ENCODE measurements at regions of chr3 and their contacts with region 1.

Region 1: DNA sequence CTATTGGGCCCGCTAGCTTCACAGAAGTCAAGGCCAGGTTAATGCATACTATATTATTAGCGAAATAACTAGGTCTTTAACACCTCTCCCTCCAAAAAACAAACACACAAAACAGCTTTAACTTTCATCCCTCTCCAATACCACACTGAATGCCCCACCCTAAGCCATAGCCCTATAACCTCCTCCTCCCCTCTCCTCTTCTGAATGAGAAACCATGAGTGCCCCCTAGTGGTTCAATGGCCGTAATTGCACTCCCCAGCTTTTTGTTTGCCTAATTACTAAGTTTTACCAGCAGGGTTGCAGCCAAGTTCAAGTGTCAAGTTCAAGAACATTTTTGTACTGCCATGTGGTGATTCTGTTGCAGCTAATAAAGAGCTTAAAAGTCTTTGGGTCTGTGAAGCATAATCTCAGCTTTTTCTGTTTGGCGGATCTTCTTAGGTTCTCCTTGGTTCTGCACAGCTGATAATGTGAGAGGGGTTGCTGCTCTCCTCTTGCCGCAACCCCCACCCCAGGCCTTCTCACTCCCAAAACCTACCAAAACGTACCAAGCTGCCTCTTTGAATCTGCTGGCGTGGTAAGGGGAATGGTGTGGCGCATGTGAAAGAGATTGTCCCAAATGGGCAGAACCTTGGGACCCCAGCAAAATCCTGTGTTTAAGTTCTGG is 57.9 kb downstream of the RPL22L1 start:
- DNase-seq: peak; percentile 64 to 73 (median 67)
- H3K4me3 ChIP-seq: no peak overlapping the region
- H3K4me3 Mint-ChIP-seq: no peak overlapping the region
- H3K27ac ChIP-seq: no peak overlapping the region
- H3K27ac Mint-ChIP-seq: no peak overlapping the region
- H3K4me1 ChIP-seq: no peaks in the 10 kb centered on the region
- H3K4me1 Mint-ChIP-seq: peaks cover 0 to 5% (median under 1%) of the 10 kb centered on the region in 4 donors
- H3K27me3 ChIP-seq: no peaks in the 10 kb centered on the region
- H3K27me3 Mint-ChIP-seq: peaks cover 0 to 2% of the 10 kb centered on the region in 2 donors

Region 2: GRCh38 chr3:170189398-170190256 is 622.4 kb before region 1 on chr3:
- CTCF ChIA-PET with region 1: interaction called, 10 read pairs
- POLR2A ChIA-PET with region 1: no interaction called
- intact Hi-C with region 1: no loop called
- DNase-seq: no peak
- H3K4me3 ChIP-seq: no peak overlapping the region
- H3K4me3 Mint-ChIP-seq: peak overlapping the region in 3 of 8 donors; percentile 21 to 49 (median 22)
- H3K27ac ChIP-seq: no peak overlapping the region
- H3K27ac Mint-ChIP-seq: no peak overlapping the region
- H3K4me1 ChIP-seq: no peaks in the 10 kb centered on the region
- H3K4me1 Mint-ChIP-seq: peaks cover 8 to 11% (median 9%) of the 10 kb centered on the region in 4 donors
- H3K27me3 ChIP-seq: no peaks in the 10 kb centered on the region
- H3K27me3 Mint-ChIP-seq: peaks cover 0 to 1% of the 10 kb centered on the region in 2 donors

Region 3: DNA sequence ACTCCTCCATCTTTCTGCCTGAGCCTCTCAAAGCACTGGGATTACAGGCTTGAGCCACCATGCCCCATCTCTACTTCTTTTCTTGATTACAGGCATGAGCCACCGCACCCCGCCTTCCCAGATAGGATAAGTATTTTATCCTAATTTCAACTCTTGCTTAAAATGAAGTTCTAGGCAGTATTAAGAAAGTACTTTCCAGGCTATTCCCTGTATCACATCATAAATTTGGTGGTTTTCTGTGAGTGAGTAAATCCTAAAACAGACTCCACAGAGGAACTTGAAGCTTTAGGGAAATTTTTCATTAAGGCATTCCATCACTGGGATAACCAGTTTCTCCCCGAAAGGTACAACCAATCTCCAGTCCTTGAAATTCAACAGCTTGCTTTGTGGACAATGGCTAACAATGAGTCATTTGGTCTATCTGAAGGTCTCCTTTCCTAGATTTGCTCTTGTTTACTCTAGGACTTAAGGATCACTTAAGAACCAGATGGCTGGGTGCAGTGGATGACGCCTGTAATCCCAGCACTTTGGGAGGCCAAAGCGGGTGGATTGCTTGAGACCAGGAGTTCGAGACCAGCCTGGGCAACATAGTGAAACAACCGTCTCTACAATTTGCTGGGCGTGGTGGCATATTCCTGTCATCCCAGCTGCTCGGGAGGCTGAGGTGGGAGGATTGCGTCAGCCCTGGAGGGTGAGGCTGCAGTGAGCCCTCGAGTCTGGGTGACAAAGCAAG is 504.2 kb before region 1 on chr3:
- CTCF ChIA-PET with region 1: interaction called, 23 read pairs
- POLR2A ChIA-PET with region 1: no interaction called
- intact Hi-C with region 1: no loop called
- DNase-seq: no peak
- H3K4me3 ChIP-seq: no peak overlapping the region
- H3K4me3 Mint-ChIP-seq: no peak overlapping the region
- H3K27ac ChIP-seq: no peak overlapping the region
- H3K27ac Mint-ChIP-seq: no peak overlapping the region
- H3K4me1 ChIP-seq: no peaks in the 10 kb centered on the region
- H3K4me1 Mint-ChIP-seq: peaks cover 0 to 1% (median 0%) of the 10 kb centered on the region in 4 donors
- H3K27me3 ChIP-seq: no peaks in the 10 kb centered on the region
- H3K27me3 Mint-ChIP-seq: no peaks in the 10 kb centered on the region

Region 4: DNA sequence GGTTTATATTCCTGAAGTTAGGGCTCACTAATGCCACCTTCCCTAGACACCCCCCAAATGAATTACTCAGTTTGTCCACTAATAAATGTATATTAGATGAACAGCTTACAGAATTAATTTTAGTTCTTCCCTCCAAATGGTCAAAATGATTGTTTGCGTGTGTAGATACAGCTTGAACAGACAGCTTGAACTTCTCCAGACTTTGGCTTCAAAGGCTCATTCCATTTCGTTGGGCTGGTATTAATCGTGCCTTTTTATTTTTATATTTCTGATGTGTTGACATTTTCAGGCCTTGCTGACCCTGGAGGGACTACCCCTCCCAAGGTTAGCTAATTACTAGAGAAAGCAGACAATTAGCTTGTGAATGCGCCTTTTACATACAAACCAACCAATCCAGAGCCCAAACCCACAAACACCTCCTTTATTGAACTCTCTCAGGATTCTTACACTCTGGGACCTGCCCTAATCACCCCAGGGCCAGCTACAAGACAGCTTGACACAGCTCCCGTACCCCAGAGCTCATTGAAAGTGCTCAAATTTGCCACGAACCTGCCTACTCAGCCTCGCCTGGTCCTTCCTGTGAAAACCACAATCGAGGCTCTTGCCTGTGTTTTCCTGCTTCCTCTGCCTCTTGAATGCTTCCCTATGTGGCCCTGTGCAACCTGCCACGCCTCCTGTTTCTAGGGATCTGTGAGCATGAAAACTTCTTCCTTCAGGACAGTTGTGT is 17.6 kb after region 1 on chr3:
- CTCF ChIA-PET with region 1: interaction called, 35 read pairs
- POLR2A ChIA-PET with region 1: no interaction called
- intact Hi-C with region 1: no loop called
- DNase-seq: no peak
- H3K4me3 ChIP-seq: no peak overlapping the region
- H3K4me3 Mint-ChIP-seq: no peak overlapping the region
- H3K27ac ChIP-seq: no peak overlapping the region
- H3K27ac Mint-ChIP-seq: peak overlapping the region in 1 of 7 donors; percentile 48
- H3K4me1 ChIP-seq: no peaks in the 10 kb centered on the region
- H3K4me1 Mint-ChIP-seq: peaks cover 0 to 9% (median 6%) of the 10 kb centered on the region in 4 donors
- H3K27me3 ChIP-seq: peaks cover 7% of the 10 kb centered on the region
- H3K27me3 Mint-ChIP-seq: peaks cover 6 to 25% of the 10 kb centered on the region in 2 donors

Region 5: DNA sequence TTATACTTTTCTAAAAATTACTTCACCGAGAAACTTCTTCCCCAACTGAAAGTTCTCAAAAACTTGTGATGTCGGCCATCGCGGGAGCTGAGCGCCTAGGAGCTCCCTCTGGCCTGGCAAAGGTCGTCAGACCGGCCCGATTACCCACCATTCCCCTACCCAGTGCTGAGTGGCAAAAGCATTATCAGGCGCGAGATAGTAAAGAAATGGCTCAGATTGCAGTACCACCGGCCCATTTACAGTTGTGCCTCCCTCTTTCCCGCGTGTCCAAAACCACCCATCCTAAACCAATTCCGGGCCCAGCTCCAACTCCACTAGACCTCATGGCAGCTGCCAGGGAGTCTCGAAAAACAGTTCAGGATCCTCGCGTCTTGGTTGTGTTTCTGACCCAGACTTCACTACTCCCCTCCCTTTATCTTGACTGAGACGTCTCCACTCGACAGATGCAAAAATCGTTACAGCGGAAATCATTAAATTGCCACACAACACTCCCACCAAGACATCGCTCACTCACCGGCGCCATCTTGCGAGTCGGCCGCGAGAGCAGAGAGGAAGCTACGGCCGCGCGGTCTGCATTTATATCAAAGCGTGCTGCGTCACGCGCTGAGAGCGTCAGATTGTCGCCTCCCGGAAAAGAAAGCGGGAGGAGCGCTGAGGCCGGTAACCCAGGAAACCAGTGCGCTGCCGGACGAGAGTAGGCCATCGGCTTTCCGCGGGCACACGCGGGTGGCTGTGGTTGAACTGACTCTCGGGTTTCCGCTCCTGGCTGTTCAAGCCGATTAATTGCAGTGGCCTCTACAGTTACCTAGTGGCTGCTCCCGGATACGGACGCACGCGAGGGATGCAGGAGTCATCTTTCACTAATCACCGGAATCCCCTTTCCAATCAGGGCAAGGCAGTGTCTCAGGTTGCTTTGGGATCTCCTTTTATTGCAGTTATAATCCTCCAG is 57.9 kb after region 1 on chr3 and contains the start of gene RPL22L1:
- CTCF ChIA-PET with region 1: interaction called, 7 read pairs
- POLR2A ChIA-PET with region 1: no interaction called
- intact Hi-C with region 1: loop called (anchors 1 kb)
- DNase-seq: peak; percentile 92 to 94 (median 94)
- H3K4me3 ChIP-seq: peak within 1 kb of the TSS; percentile 76 to 92
- H3K4me3 Mint-ChIP-seq: peak within 1 kb of the TSS; percentile 91 to 98 (median 96)
- H3K27ac ChIP-seq: peak within 1 kb of the TSS; percentile 82
- H3K27ac Mint-ChIP-seq: peak within 1 kb of the TSS; percentile 92 to 99 (median 98)
- H3K4me1 ChIP-seq: peaks cover 34% of the 10 kb centered on the region
- H3K4me1 Mint-ChIP-seq: peaks cover 12 to 36% (median 24%) of the 10 kb centered on the region in 4 donors
- H3K27me3 ChIP-seq: no peaks in the 10 kb centered on the region
- H3K27me3 Mint-ChIP-seq: no peaks in the 10 kb centered on the region
- total RNA-seq, gene RPL22L1: 31.9 to 32.3 TPM

Measured in CD4-positive, alpha-beta memory T cell (primary cell).